A549 (cell line): ENCODE measurements at regions of chr2 and their contacts with region 1.

Region 1: DNA sequence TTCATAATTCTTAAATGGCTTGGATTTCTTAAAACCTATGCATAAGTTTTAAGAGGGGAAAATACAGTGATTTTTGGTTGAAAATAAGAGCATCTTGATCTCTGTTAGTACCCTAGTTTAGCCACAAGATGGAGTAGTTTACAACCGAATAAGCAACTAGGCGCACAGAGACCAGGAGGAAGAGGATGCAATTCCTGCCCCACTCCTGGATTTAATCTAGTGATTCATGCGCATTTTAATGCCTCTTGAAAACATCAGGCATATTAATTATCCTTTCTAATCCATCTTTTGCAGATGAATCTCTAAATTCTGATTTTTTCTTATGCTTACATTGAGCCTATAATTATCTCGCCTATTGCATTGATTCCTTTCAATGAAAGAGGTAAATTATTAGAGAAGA is 76.7 kb downstream of the MRPS9 start:
- DNase-seq: peak; percentile 59 to 70
- ATAC-seq: peak; percentile 65 to 83; a peak in 4 of 6 replicates
- H3K4me3 ChIP-seq: no peak overlapping the region
- H3K27ac ChIP-seq: no peak overlapping the region
- H3K4me1 ChIP-seq: no peaks in the 10 kb centered on the region
- CTCF ChIP-seq: peak; percentile 82
- EP300 ChIP-seq: no peak
- POLR2A ChIP-seq: no peak
- RAD21 ChIP-seq: peak; percentile 86 to 89

Region 2: GRCh38 chr2:105125428-105125827 is 10.9 kb after region 1 on chr2:
- CTCF ChIA-PET with region 1: interaction called, 17 read pairs
- POLR2A ChIA-PET with region 1: no interaction called
- DNase-seq: peak in 1 of 2 experiments; percentile 31
- ATAC-seq: peak; percentile 56 to 75; a peak in 4 of 6 replicates
- H3K4me3 ChIP-seq: no peak overlapping the region
- H3K27ac ChIP-seq: no peak overlapping the region
- H3K4me1 ChIP-seq: no peaks in the 10 kb centered on the region
- CTCF ChIP-seq: no peak
- EP300 ChIP-seq: no peak
- POLR2A ChIP-seq: no peak
- RAD21 ChIP-seq: no peak

Region 3: GRCh38 chr2:105188343-105188742 is 73.8 kb after region 1 on chr2:
- CTCF ChIA-PET with region 1: interaction called, 10 read pairs
- POLR2A ChIA-PET with region 1: no interaction called
- DNase-seq: no peak
- ATAC-seq: no peak
- H3K4me3 ChIP-seq: no peak overlapping the region
- H3K27ac ChIP-seq: no peak overlapping the region
- H3K4me1 ChIP-seq: no peaks in the 10 kb centered on the region
- CTCF ChIP-seq: no peak
- EP300 ChIP-seq: no peak
- POLR2A ChIP-seq: no peak
- RAD21 ChIP-seq: no peak

Region 4: DNA sequence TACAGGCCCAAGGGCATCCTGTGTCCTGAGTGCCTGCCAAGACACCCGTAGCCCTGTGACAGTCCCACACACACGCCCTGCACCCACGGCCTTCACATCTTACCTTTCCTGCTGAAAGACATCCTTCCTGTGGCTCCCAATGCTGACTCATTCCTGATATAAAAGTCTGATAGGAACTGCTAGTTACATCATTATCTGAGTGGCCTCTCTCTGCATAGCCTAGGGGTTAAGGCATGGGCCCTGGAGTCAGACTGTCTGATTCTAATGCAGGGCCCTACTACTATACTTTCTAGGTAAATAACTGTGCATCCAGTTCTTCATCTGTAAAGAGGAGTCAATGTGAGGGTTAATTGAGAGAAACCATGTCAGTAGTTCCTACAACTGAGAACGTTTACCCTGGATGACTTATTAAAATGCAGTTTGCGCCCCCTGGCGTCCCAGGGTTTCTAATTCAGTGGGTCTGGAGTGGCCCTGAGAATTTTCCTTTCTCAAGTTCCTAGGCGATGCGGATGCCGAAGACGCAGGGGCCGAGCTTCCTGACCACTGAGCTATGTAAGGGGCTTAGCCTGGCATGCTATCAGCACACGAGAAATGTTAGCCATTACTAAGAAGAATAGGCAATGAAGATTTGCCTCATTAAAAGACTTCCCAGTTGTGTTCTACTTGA is 121.0 kb after region 1 on chr2:
- CTCF ChIA-PET with region 1: interaction called, 312 read pairs
- POLR2A ChIA-PET with region 1: no interaction called
- DNase-seq: peak; percentile 34 to 82
- ATAC-seq: peak; percentile 79 to 90
- H3K4me3 ChIP-seq: no peak overlapping the region
- H3K27ac ChIP-seq: peak overlapping the region; percentile 0 to 2; a peak in 1 of 6 replicates
- H3K4me1 ChIP-seq: peaks cover 5% of the 10 kb centered on the region; the same call in 2 of the 3 replicates
- CTCF ChIP-seq: peak; percentile 87
- EP300 ChIP-seq: no peak
- POLR2A ChIP-seq: no peak
- RAD21 ChIP-seq: peak; percentile 72 to 73